Endothelial cell of umbilical vein (primary cell): ENCODE measurements at regions of chr1 and their contacts with region 1.

Region 1: GRCh38 chr1:61453111-61453961 is 271.6 kb downstream of the TM2D1 start:
- DNase-seq: peak; percentile 97
- H3K4me3 ChIP-seq: no peak overlapping the region
- H3K27ac ChIP-seq: peak overlapping the region; percentile 89
- H3K4me1 ChIP-seq: peaks cover 39% of the 10 kb centered on the region
- H3K27me3 ChIP-seq: no peaks in the 10 kb centered on the region
- CTCF ChIP-seq: peak; percentile 75 to 79
- POLR2A ChIP-seq: peak; percentile 35

Region 2: GRCh38 chr1:60978421-60979357 is 474.6 kb before region 1 on chr1:
- CTCF ChIA-PET with region 1: interaction called, 12 read pairs
- POLR2A ChIA-PET with region 1: no interaction called
- dilution Hi-C with region 1: no loop called
- intact Hi-C with region 1: loop called (anchors 1 kb)
- DNase-seq: peak; percentile 69
- H3K4me3 ChIP-seq: no peak overlapping the region
- H3K27ac ChIP-seq: no peak overlapping the region
- H3K4me1 ChIP-seq: peaks cover 6% of the 10 kb centered on the region
- H3K27me3 ChIP-seq: no peaks in the 10 kb centered on the region
- CTCF ChIP-seq: peak; percentile 60 to 77
- POLR2A ChIP-seq: no peak

Region 3: GRCh38 chr1:61141288-61142042 is 311.9 kb before region 1 on chr1:
- CTCF ChIA-PET with region 1: interaction called, 4 read pairs
- POLR2A ChIA-PET with region 1: no interaction called
- dilution Hi-C with region 1: no loop called
- intact Hi-C with region 1: loop called (anchors 5 kb)
- DNase-seq: peak; percentile 86
- H3K4me3 ChIP-seq: peak overlapping the region in 1 of 3 experiments; percentile 1
- H3K27ac ChIP-seq: peak overlapping the region; percentile 57
- H3K4me1 ChIP-seq: peaks cover 34% of the 10 kb centered on the region
- H3K27me3 ChIP-seq: no peaks in the 10 kb centered on the region
- CTCF ChIP-seq: no peak
- POLR2A ChIP-seq: no peak

Region 4: GRCh38 chr1:61337981-61338848 is 115.1 kb before region 1 on chr1:
- CTCF ChIA-PET with region 1: interaction called, 3 read pairs
- POLR2A ChIA-PET with region 1: no interaction called
- dilution Hi-C with region 1: no loop called
- intact Hi-C with region 1: loop called (anchors 1 kb)
- DNase-seq: peak; percentile 93
- H3K4me3 ChIP-seq: peak overlapping the region in 1 of 3 experiments; percentile 49
- H3K27ac ChIP-seq: peak overlapping the region; percentile 93
- H3K4me1 ChIP-seq: peaks cover 27% of the 10 kb centered on the region
- H3K27me3 ChIP-seq: no peaks in the 10 kb centered on the region
- CTCF ChIP-seq: peak; percentile 71 to 77
- POLR2A ChIP-seq: no peak

Region 5: GRCh38 chr1:61424382-61424781 is 29.0 kb before region 1 on chr1:
- CTCF ChIA-PET with region 1: no interaction called
- POLR2A ChIA-PET with region 1: no interaction called
- dilution Hi-C with region 1: no loop called
- intact Hi-C with region 1: loop called (anchors 1 kb)
- DNase-seq: no peak
- H3K4me3 ChIP-seq: no peak overlapping the region
- H3K27ac ChIP-seq: no peak overlapping the region
- H3K4me1 ChIP-seq: peaks cover 22% of the 10 kb centered on the region
- H3K27me3 ChIP-seq: no peaks in the 10 kb centered on the region
- CTCF ChIP-seq: no peak
- POLR2A ChIP-seq: no peak

Region 6: GRCh38 chr1:61518670-61519400 is 65.5 kb after region 1 on chr1:
- CTCF ChIA-PET with region 1: no interaction called
- POLR2A ChIA-PET with region 1: no interaction called
- dilution Hi-C with region 1: no loop called
- intact Hi-C with region 1: no loop called
- DNase-seq: no peak
- H3K4me3 ChIP-seq: no peak overlapping the region
- H3K27ac ChIP-seq: no peak overlapping the region
- H3K4me1 ChIP-seq: no peaks in the 10 kb centered on the region
- H3K27me3 ChIP-seq: no peaks in the 10 kb centered on the region
- CTCF ChIP-seq: no peak
- POLR2A ChIP-seq: no peak

Region 7: DNA sequence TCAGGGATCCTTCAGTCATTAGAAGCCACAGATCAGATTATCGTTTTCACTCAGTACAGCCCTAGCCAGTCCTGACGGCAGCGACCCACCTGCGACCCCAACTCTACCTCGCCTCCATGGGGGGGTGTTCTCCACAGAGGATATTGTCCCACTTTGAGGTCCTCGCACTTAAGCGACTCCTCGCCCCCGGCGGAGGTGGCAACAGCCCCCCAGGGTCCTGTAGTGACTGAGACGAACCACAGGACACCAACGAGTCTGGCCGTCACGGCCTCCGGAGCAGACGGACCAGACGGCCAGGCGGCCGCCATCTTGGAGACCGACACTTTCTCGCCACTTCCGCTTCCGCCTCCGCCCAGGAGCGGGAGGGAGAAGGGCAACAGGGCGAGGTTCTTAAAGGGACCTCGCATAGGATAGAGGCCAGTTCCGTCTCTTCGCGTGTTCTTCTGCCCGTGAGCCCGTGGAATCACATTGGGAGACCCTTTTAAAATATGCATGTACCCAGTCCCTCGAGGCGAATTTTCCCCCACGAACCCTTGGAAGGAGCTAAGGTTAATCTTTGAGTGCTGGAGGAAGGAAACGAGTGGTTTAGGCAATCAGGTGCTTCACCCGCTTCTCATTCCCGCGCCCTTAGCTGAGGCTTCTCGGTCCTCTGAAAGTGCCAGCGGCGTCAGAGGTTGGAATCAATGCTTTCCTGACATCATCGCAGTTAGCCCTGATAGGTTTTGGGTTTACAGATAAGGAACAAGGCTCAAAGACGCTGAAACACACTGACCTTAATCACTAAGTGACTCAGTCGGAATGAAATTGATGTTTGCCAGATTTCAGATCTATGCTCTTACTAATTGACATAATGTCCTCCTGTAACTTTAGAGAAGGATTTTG is 271.7 kb after region 1 on chr1 and contains the start of gene TM2D1:
- CTCF ChIA-PET with region 1: no interaction called
- POLR2A ChIA-PET with region 1: no interaction called
- dilution Hi-C with region 1: no loop called
- intact Hi-C with region 1: loop called (anchors 1 kb)
- DNase-seq: peak; percentile 88
- H3K4me3 ChIP-seq: peak within 1 kb of the TSS; percentile 81 to 97 (median 87)
- H3K27ac ChIP-seq: peak within 1 kb of the TSS; percentile 97
- H3K4me1 ChIP-seq: peaks cover 18% of the 10 kb centered on the region
- H3K27me3 ChIP-seq: no peaks in the 10 kb centered on the region
- CTCF ChIP-seq: no peak
- POLR2A ChIP-seq: peak; percentile 99
- total RNA-seq, gene TM2D1: 37.5 and 46.1 TPM in 2 replicates